BJ (cell line): ENCODE measurements at regions of chr14 and their contacts with region 1.

Region 1: GRCh38 chr14:51860164-51860824 is at the start of gene GNG2:
- DNase-seq: no peak
- H3K4me3 ChIP-seq: peak within 1 kb of the TSS; percentile 40
- H3K27me3 ChIP-seq: no peaks in the 10 kb centered on the region
- CTCF ChIP-seq: no peak
- polyA plus RNA-seq, gene GNG2: 4.5 and 7.6 TPM in 2 replicates

Region 2: DNA sequence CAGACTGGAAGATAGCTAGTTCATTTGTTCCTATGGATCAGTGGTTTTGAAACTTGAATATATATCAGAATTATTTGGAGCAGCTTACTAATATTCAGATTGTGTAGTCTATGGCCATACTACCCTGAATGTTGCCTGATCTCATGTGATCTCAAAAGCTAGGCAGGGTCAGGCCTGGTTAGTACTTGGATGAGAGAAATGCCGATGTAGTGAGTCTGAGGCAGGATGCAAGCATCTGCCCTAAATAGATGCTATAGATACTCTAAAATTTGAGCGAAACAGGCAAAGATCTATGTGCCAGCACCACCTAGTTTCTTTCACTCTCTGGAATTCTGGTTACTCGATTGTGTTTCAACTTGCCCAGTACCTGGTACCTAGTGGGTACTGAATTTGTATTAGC is 167.6 kb before region 1 on chr14:
- CTCF ChIA-PET with region 1: no interaction called
- POLR2A ChIA-PET with region 1: interaction called, 10 read pairs
- DNase-seq: no peak
- H3K4me3 ChIP-seq: no peak overlapping the region
- H3K27me3 ChIP-seq: no peaks in the 10 kb centered on the region
- CTCF ChIP-seq: no peak